ENCODE measurements at regions of chr6 and their contacts with region 1.

Region 1: GRCh38 chr6:96841345-96841744 is 4.1 kb upstream of the GPR63 start:
- DNase-seq: no peak
- ATAC-seq: no peak
- H3K4me3 ChIP-seq: no peak overlapping the region
- H3K4me3 Mint-ChIP-seq: no peak overlapping the region
- H3K27ac ChIP-seq: no peak overlapping the region
- H3K27ac Mint-ChIP-seq: no peak overlapping the region
- H3K4me1 ChIP-seq: peaks cover 2 to 17% of the 10 kb centered on the region in 2 experiments
- H3K4me1 Mint-ChIP-seq: peaks cover 11 to 14% (median 13%) of the 10 kb centered on the region in 3 donors
- H3K27me3 ChIP-seq: peaks cover 2 to 23% of the 10 kb centered on the region in 2 experiments
- H3K27me3 Mint-ChIP-seq: peaks cover 25 to 35% of the 10 kb centered on the region in 2 donors

Region 2: DNA sequence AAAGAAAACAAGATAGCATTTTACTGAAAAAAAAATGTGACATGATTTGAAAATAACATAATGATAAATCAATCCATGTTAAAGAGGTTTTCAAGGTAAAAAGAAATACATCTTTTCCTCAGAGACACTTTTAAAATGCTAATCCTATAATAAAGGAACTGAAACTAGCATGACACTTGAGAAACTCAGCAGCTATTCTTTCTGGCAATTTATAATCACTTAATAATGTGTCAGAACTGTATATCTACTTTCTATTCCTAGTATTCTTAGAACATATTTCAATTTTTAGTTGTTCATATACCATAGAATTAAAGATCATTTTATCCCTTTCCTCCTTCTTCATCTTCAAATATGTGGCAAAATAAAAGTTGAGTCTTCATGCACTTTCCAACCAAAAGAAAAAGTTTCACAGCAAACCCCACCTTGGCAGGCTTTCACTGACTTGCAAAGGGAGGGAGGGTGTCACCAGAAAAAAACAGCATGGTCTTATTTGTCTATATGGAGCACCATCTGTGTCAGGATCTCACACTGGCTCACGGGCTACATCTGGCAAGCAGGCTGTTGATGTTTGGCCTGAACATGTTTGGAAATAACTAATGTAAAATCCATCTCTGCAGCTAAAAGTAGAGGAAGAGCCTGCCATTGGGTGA is 229.9 kb before region 1 on chr6:
- CTCF ChIA-PET with region 1: no interaction called
- POLR2A ChIA-PET with region 1: interaction called in 1 of 2 experiments, 11 read pairs
- DNase-seq: no peak
- ATAC-seq: no peak
- H3K4me3 ChIP-seq: no peak overlapping the region
- H3K4me3 Mint-ChIP-seq: no peak overlapping the region
- H3K27ac ChIP-seq: no peak overlapping the region
- H3K27ac Mint-ChIP-seq: no peak overlapping the region
- H3K4me1 ChIP-seq: no peaks in the 10 kb centered on the region
- H3K4me1 Mint-ChIP-seq: no peaks in the 10 kb centered on the region
- H3K27me3 ChIP-seq: no peaks in the 10 kb centered on the region
- H3K27me3 Mint-ChIP-seq: peaks cover 0 to 22% of the 10 kb centered on the region in 2 donors